ENCODE measurements at regions of chr3 and their contacts with region 1.

Region 1: DNA sequence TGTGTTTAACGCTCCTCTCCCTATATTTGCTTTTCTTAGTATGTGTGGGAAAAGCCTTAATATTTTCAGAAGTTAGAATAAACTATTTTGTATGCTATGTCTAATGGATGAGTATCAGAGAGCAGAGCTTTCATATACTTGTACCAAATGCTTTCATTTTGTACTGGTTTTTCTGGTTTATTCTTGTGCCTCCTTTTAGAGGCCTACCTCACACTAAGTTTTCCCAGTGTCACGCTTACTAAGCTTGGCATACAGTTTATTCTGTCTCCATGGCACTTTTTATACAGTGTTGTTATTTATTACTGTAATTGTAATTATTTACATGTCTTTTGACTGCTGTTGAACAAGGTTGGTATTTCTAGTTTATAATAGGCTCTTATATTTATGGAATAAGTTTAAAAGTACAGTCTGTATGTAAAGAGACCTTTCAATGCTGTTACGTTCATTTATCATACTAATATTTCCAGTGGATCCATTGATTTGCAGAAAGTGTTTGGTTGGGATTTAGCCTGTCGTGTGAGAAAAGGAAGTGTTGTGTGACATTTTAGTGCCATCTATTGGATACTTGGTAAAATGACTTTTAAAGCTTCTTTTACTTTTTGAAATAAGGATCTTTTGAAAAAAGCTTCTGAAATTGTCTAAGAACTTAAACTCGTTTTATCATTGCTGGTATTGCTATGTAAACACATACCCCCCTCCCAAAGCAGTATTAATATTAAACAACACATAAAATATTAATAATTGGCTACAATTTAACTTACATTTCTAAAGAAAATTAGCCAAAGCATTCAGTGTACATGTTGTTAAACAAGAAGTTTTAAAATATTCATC is 5.2 kb upstream of the EBLN2 start:
- DNase-seq: no peak
- H3K4me3 Mint-ChIP-seq: no peak overlapping the region
- H3K27ac Mint-ChIP-seq: no peak overlapping the region
- H3K4me1 Mint-ChIP-seq: peaks cover 26% of the 10 kb centered on the region
- H3K27me3 Mint-ChIP-seq: no peaks in the 10 kb centered on the region

Region 2: DNA sequence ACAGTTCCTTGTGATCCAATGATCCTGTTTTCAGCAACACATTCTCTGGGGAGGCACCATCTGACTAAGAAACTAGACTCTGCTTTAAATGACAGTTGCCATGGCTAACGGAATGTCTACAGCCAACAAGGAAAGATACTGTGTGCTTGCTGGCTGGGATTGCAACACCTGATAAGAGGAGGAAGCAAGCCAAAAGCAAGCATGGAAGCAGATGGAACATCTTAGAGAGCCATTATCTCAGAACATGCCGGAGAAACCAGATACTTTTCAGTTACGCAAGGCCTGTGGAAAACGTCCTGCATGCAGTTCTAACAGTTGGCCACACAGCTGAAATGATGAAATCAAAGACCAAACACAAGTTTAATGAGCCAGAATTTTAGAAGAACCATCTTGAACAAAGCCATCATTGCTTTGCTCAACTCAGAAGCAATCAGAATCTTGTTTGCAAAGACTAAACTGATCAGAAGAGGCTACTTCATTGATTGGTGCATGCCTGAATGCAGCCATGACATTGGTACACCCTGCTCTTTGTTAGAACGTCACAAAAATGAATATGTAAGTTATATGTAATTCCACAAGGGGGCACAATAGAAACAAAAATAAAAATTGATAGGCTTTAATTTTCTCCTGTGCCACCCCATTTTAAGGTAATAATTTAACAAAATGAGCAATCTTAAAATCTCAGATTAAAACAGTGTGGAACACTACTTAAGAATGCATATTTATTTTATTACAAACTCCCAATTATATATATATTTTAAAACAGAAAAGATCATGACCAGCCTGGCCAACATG is 117.6 kb before region 1 on chr3:
- CTCF ChIA-PET with region 1: interaction called, 69 read pairs
- POLR2A ChIA-PET with region 1: interaction called, 3 read pairs
- intact Hi-C with region 1: loop called (anchors 1 kb)
- DNase-seq: peak; percentile 34
- H3K4me3 Mint-ChIP-seq: no peak overlapping the region
- H3K27ac Mint-ChIP-seq: no peak overlapping the region
- H3K4me1 Mint-ChIP-seq: peaks cover 3% of the 10 kb centered on the region
- H3K27me3 Mint-ChIP-seq: peaks cover 2% of the 10 kb centered on the region

Region 3: DNA sequence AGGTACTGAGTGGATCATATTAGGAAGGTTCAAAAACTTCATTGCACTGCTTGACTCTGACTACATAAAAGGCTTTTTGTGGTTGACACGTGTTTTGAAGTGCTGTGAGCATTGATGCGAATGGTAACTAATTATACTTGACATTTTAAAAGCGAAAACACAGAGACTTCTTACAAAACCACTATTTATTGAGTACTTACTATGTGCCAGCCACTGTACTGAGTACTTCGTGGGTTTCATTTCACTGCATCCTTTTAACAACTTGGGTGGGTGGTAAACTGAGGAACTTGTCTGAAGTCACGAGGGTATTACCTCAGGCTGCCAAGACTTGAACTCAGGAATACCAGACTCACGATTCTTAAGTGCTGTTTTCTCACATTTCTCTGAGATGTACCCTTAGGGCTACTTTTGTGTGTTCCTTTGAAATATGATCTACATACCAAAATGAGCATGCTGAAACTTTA is 104.9 kb before region 1 on chr3:
- CTCF ChIA-PET with region 1: interaction called, 18 read pairs
- POLR2A ChIA-PET with region 1: interaction called, 3 read pairs
- intact Hi-C with region 1: no loop called
- DNase-seq: no peak
- H3K4me3 Mint-ChIP-seq: no peak overlapping the region
- H3K27ac Mint-ChIP-seq: no peak overlapping the region
- H3K4me1 Mint-ChIP-seq: peaks cover 12% of the 10 kb centered on the region
- H3K27me3 Mint-ChIP-seq: peaks cover 2% of the 10 kb centered on the region

Region 4: GRCh38 chr3:73045391-73045790 is 10.8 kb before region 1 on chr3:
- CTCF ChIA-PET with region 1: interaction called, 15 read pairs
- POLR2A ChIA-PET with region 1: no interaction called
- intact Hi-C with region 1: no loop called
- DNase-seq: no peak
- H3K4me3 Mint-ChIP-seq: no peak overlapping the region
- H3K27ac Mint-ChIP-seq: no peak overlapping the region
- H3K4me1 Mint-ChIP-seq: peaks cover 57% of the 10 kb centered on the region
- H3K27me3 Mint-ChIP-seq: no peaks in the 10 kb centered on the region

Region 5: DNA sequence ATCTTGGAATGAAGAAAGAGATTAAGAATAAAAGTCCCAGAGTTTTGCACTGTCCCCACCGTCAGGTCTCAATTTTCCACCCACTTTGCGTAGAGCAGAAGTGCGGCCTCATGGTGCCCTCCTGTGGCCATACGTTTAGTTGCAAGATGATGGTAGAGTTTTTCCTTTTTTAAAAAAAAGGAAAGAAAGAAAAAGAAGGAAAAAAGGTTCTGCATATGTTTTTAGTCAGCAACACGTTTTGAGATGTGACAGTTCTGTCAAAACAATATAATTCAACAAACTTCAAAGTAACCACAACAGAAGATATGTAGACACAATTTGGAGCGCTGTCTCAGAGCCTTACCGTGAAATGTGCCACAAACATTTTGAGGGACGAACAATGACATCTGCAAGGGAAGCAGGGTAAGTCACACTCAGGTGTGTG is 29.9 kb after region 1 on chr3:
- CTCF ChIA-PET with region 1: interaction called, 18 read pairs
- POLR2A ChIA-PET with region 1: no interaction called
- intact Hi-C with region 1: no loop called
- DNase-seq: peak; percentile 62
- H3K4me3 Mint-ChIP-seq: no peak overlapping the region
- H3K27ac Mint-ChIP-seq: no peak overlapping the region
- H3K4me1 Mint-ChIP-seq: peaks cover 11% of the 10 kb centered on the region
- H3K27me3 Mint-ChIP-seq: no peaks in the 10 kb centered on the region

Region 6: DNA sequence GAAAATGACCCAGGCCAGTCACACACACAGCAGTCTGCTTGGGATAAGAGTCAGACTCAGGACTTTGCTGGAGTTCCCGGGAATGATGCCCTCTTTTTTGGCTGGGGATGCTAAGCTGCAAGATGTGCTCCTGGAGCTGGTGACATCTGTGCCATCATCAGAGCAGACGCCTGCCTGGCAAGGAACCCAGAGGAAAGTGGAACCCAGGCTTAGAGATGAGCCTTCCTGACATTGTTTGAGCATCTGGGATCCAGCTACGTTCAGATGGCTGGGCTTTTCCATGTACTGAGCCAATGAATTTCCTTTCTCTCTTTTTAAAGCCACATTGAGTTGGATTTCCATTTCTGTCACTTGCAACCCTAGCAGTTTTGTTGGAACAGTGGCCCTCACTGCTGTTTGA is 58.5 kb after region 1 on chr3:
- CTCF ChIA-PET with region 1: no interaction called
- POLR2A ChIA-PET with region 1: no interaction called
- intact Hi-C with region 1: no loop called
- DNase-seq: no peak
- H3K4me3 Mint-ChIP-seq: no peak overlapping the region
- H3K27ac Mint-ChIP-seq: no peak overlapping the region
- H3K4me1 Mint-ChIP-seq: no peaks in the 10 kb centered on the region
- H3K27me3 Mint-ChIP-seq: peaks cover 13% of the 10 kb centered on the region

Measured in activated CD4-positive, alpha-beta memory T cell treated with anti-CD3 and anti-CD28 coated beads for 36 hours (primary cell).